Uterus (tissue), 4 donors: ENCODE measurements at regions of chr11 and their contacts with region 1.

Region 1: GRCh38 chr11:44621140-44621681 is 55.7 kb downstream of the CD82 start:
- DNase-seq: peak; percentile 72 to 82
- H3K4me3 ChIP-seq: no peak overlapping the region
- H3K27ac ChIP-seq: no peak overlapping the region
- H3K4me1 ChIP-seq: no peaks in the 10 kb centered on the region
- H3K27me3 ChIP-seq: no peaks in the 10 kb centered on the region
- CTCF ChIP-seq: peak; percentile 92 to 99 (median 96)
- POLR2A ChIP-seq: peak in 1 of 2 donors; percentile 13

Region 2: DNA sequence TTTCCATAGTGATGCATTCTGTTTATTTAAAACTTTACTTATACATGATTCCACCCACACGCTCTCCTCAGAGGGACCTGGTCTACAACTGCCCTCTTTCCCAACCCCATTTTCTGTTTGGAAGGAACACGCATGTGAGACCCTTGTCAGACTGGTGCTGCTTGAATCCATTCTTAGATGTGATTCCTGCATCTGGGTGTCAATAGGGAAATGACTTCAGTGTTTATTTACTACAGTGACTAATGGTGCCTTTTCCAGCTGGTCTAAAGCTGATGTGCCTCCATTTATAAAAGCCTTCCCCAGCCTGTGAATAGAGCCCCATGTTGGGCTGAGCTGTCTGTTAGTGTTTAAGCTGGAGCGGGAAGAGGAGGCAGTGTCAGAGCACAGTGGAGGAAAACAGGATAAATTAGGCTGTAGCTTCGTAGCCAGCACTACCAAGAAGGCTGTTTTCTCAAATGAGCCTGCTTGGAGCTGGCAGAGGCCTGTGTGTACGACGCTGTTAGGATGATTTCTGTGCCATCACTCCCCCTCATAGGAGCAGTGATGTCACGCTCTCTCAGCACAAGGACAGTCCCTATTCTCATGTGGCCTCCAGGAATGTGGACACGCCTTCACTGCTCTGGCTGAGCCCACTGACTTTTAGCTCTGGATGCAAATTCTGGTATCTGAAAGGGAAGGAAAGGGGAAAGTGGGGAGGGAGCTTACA is 697.7 kb before region 1 on chr11:
- intact Hi-C with region 1: no loop called
- DNase-seq: peak; percentile 64 to 70
- H3K4me3 ChIP-seq: no peak overlapping the region
- H3K27ac ChIP-seq: peak overlapping the region; percentile 90 to 93
- H3K4me1 ChIP-seq: peaks cover 24 to 46% of the 10 kb centered on the region in 2 donors
- H3K27me3 ChIP-seq: no peaks in the 10 kb centered on the region
- CTCF ChIP-seq: no peak
- POLR2A ChIP-seq: peak in 1 of 2 donors; percentile 35

Region 3: GRCh38 chr11:44556735-44557409 is 64.3 kb before region 1 on chr11:
- intact Hi-C with region 1: loop called (anchors 2 kb)
- DNase-seq: peak; percentile 67 to 72
- H3K4me3 ChIP-seq: no peak overlapping the region
- H3K27ac ChIP-seq: no peak overlapping the region
- H3K4me1 ChIP-seq: no peaks in the 10 kb centered on the region
- H3K27me3 ChIP-seq: no peaks in the 10 kb centered on the region
- CTCF ChIP-seq: peak; percentile 86 to 92 (median 88)
- POLR2A ChIP-seq: no peak

Region 4: GRCh38 chr11:44911029-44911814 is 290.0 kb after region 1 on chr11:
- intact Hi-C with region 1: loop called (anchors 5 kb)
- DNase-seq: peak; percentile 82 to 93
- H3K4me3 ChIP-seq: no peak overlapping the region
- H3K27ac ChIP-seq: peak overlapping the region; percentile 5 to 22
- H3K4me1 ChIP-seq: no peaks in the 10 kb centered on the region
- H3K27me3 ChIP-seq: no peaks in the 10 kb centered on the region
- CTCF ChIP-seq: peak; percentile 77 to 86 (median 82)
- POLR2A ChIP-seq: no peak